Activated CD4-positive, alpha-beta T cell treated with anti-CD3 and anti-CD28 coated beads for 36 hours (primary cell): ENCODE measurements at regions of chr5 and their contacts with region 1.

Region 1: DNA sequence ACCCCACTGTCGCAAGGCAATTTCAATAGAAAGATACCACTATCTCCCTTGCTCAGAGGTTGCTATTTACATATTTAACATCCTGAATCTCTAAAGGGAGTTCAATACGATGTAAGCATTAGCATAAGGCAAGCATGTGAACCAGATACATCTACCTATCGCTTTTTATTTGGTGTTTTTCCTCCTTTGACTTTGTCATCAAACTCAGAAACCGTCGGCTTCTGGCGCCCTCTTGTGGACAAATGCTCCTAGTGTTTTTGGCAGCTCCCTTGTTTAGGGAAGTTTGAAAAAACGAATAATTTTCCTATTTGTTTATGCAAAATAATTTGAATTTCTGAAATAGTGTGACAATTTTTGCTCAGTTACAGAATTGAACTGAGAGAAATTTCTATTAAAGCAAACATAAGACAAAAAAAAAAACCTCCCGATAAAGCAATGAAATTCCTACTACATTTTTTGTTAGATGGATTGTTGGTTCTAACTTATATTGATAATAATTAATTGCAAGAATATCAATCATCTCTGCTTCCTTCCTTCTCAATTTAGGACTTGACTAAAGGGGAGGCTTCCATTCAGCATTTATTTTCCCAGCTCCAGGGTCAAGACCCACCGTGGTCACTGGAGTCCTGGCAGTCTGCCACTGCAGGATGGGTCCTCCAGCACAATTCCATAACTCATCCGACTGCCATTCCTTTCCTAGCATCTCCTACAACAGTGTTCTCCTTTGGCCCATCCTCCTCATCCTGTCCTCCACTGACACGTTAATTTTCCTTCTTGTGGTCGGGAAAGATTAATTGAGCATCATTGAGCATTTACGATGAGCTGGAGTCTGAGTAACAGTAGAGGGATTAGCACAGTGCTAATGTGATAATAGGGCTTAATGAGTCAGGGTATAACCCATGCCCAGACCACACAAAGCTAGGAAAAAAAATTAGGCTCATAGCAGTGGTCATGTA is 131.8 kb upstream of the CHD1 start:
- DNase-seq: peak; percentile 91
- ATAC-seq: peak; percentile 60
- H3K4me3 Mint-ChIP-seq: no peak overlapping the region
- H3K27ac Mint-ChIP-seq: no peak overlapping the region
- H3K4me1 Mint-ChIP-seq: peaks cover 6% of the 10 kb centered on the region
- H3K27me3 Mint-ChIP-seq: peaks cover 9% of the 10 kb centered on the region

Region 2: GRCh38 chr5:98839469-98840383 is 220.9 kb before region 1 on chr5:
- CTCF ChIA-PET with region 1: interaction called, 5 read pairs
- POLR2A ChIA-PET with region 1: no interaction called
- intact Hi-C with region 1: loop called in 1 of 2 experiments (anchors 5 kb)
- DNase-seq: peak; percentile 43
- ATAC-seq: peak; percentile 68
- H3K4me3 Mint-ChIP-seq: peak overlapping the region; percentile 5
- H3K27ac Mint-ChIP-seq: no peak overlapping the region
- H3K4me1 Mint-ChIP-seq: peaks cover 3% of the 10 kb centered on the region
- H3K27me3 Mint-ChIP-seq: no peaks in the 10 kb centered on the region

Region 3: GRCh38 chr5:98923966-98924365 is 136.6 kb before region 1 on chr5:
- CTCF ChIA-PET with region 1: interaction called, 24 read pairs
- POLR2A ChIA-PET with region 1: interaction called, 8 read pairs
- intact Hi-C with region 1: no loop called
- DNase-seq: peak; percentile 36
- ATAC-seq: no peak
- H3K4me3 Mint-ChIP-seq: no peak overlapping the region
- H3K27ac Mint-ChIP-seq: peak overlapping the region; percentile 63
- H3K4me1 Mint-ChIP-seq: peaks cover 61% of the 10 kb centered on the region
- H3K27me3 Mint-ChIP-seq: no peaks in the 10 kb centered on the region

Region 4: DNA sequence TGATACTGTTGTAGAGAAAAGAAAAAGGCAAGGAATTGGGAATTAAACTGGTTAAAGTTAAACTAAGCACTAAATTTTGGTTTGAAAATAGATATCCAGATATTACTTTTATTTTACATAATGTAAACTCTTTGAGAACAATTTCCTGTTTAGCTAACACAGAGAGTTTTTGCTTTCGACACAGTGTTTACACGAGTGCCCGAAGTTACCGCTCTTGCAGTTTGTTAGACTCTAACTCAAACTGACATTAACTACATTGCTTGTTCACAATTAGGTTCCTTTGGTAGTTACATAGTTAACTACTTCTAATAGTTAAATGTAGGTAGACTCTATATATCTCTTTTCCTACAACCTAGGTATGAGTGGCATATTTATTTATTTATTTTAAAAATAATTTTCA is 14.7 kb before region 1 on chr5:
- CTCF ChIA-PET with region 1: interaction called, 12 read pairs
- POLR2A ChIA-PET with region 1: no interaction called
- intact Hi-C with region 1: no loop called
- DNase-seq: no peak
- ATAC-seq: no peak
- H3K4me3 Mint-ChIP-seq: no peak overlapping the region
- H3K27ac Mint-ChIP-seq: no peak overlapping the region
- H3K4me1 Mint-ChIP-seq: peaks cover 4% of the 10 kb centered on the region
- H3K27me3 Mint-ChIP-seq: no peaks in the 10 kb centered on the region

Region 5: DNA sequence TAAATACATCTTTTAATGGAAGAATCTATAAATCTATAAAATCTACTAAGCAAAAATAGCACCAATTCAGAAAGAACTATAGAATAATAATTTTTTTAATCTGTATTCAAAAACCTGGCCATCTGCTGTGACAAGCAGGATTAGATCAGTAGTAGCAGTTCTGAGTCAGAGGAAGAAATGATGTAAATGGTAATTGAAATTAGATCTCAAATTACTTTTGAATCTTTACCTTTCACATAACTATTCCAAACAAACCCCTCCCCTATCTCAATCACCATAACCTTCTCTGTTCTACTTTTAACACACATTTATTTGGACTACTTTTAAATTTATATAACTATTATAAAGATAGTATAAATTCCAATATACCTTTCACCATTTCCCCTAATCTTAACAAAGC is 746.8 kb after region 1 on chr5:
- CTCF ChIA-PET with region 1: no interaction called
- POLR2A ChIA-PET with region 1: no interaction called
- intact Hi-C with region 1: no loop called
- DNase-seq: no peak
- ATAC-seq: no peak
- H3K4me3 Mint-ChIP-seq: no peak overlapping the region
- H3K27ac Mint-ChIP-seq: no peak overlapping the region
- H3K4me1 Mint-ChIP-seq: no peaks in the 10 kb centered on the region
- H3K27me3 Mint-ChIP-seq: no peaks in the 10 kb centered on the region